Pancreas (tissue), 10 donors: ENCODE measurements at regions of chr6 and their contacts with region 1.

Region 1: GRCh38 chr6:85678602-85679444 is 36.1 kb upstream of the SYNCRIP start:
- DNase-seq: peak; percentile 96 to 99 (median 97)
- ATAC-seq: peak; percentile 96 to 99 (median 96)
- H3K4me3 ChIP-seq: peak overlapping the region; percentile 64 to 83 (median 72)
- H3K27ac ChIP-seq: peak overlapping the region; percentile 73 to 90 (median 80)
- H3K4me1 ChIP-seq: peaks cover 4 to 13% (median 4%) of the 10 kb centered on the region in 3 donors
- H3K27me3 ChIP-seq: no peaks in the 10 kb centered on the region
- CTCF ChIP-seq: no peak

Region 2: GRCh38 chr6:85240787-85241385 is 437.9 kb before region 1 on chr6:
- intact Hi-C with region 1: no loop called
- DNase-seq: no peak
- ATAC-seq: no peak
- H3K4me3 ChIP-seq: no peak overlapping the region
- H3K27ac ChIP-seq: no peak overlapping the region
- H3K4me1 ChIP-seq: no peaks in the 10 kb centered on the region
- H3K27me3 ChIP-seq: no peaks in the 10 kb centered on the region
- CTCF ChIP-seq: no peak

Region 3: DNA sequence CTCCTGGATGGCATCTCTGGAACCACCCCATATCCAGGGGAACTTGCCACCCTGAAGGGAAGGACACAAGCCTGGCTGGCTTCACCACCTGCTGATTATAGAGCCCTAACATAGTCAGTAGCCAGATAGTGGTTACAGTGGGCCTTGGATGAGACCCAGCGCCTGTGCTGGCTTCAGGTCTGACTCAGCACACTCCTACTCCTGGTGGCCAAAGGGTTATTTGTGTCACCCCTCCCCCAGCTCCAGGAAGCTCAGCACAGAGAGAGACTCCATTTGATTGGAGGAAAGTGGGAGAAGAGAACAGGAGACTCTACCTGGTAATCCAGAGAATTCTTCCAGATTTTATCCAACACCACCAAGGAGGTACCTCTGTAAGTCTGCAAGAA is 97.9 kb before region 1 on chr6:
- intact Hi-C with region 1: no loop called
- DNase-seq: peak in 4 of 6 donors; percentile 23 to 62 (median 42)
- ATAC-seq: peak; percentile 75 to 86 (median 82)
- H3K4me3 ChIP-seq: no peak overlapping the region
- H3K27ac ChIP-seq: peak overlapping the region in 3 of 4 donors; percentile 26 to 63 (median 40)
- H3K4me1 ChIP-seq: peaks cover 20 to 28% (median 26%) of the 10 kb centered on the region in 3 donors
- H3K27me3 ChIP-seq: no peaks in the 10 kb centered on the region
- CTCF ChIP-seq: no peak

Region 4: DNA sequence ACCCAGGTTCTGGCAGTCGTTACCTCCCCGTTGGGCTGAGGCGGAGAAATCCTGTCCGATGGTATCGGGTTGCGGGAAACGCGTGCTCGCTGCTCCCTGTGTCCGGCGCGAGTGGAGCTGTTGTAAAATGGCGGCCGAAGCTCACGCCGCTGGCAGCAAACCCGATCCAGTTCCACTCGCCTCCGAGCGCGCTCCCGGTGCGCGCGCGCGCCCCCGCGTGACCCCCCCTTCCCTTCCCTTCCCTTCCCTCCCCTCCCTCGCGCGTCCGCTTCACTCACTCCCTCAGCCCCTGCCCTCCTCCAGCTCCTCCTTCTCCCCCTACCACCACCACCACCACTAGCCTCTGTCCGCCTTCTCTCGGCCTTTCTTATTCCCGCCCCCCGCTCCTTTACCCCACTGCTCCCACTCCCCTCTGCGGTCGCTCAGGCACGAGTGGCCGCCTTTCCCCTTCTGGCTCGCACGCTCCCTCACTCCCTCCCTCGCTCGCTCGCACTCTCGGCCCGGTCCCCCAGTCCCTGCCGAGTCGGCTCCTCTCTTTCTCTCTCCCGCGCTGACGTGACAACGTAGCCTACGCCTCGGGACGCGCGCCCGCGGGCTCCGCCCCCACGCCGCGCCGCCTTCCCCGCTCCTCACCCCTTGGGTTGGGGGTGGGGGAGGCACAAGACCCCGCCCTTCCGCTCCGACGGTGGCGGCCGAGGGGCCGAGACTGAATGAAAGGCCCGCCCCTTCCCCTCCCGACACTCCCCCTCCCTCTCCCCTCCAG is 35.9 kb before region 1 on chr6 and contains the start of gene SYNCRIP:
- intact Hi-C with region 1: loop called in 2 of 3 experiments (anchors 5 kb)
- DNase-seq: peak; percentile 98 to 100 (median 99)
- ATAC-seq: peak; percentile 81 to 89 (median 84)
- H3K4me3 ChIP-seq: peak within 1 kb of the TSS; percentile 49 to 97 (median 90)
- H3K27ac ChIP-seq: peak within 1 kb of the TSS; percentile 97 to 99 (median 99)
- H3K4me1 ChIP-seq: peaks cover 6 to 32% (median 27%) of the 10 kb centered on the region in 3 donors
- H3K27me3 ChIP-seq: no peaks in the 10 kb centered on the region
- CTCF ChIP-seq: no peak
- total RNA-seq, gene SYNCRIP: 23.3 to 48.9 (median 43.5) TPM